HAP-1 (cell line): ENCODE measurements at regions of chr11 and their contacts with region 1.

Region 1: DNA sequence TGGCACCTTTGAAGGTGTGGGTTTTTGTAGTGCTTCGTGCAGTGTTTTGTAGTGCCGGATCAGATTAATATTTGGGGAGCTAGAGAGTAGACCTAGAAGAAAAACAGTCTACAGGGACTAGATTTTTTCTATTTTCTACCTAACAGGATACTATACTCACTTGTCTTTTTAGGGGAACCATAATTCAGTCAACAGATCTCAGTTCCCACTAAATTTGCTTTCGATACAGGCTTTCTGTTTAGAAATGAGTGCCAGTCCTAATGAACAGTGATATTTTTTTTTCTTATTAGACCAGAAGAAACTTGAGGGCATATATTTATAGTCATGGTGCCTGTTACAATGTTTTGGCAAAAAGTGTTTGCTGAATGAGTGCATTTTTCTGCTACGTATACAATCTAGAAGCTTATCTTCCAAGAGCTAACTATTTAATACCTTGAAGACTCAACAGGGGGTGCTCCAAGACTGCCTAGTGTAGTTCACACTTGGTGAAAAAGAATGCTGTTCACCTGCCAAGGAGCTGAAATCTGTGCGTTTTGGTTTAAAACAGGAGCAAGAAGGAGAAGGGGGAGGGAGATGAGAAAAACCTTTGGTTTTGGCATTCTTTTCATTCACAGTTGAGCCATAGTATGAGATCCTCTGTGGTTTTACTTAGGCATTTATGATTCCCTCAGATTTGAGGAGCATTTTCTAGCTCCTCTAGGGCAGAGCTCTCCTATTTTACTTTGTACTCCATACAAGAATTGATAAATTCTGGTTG is 44.9 kb upstream of the VSTM5 start:
- DNase-seq: peak; percentile 38 to 51
- H3K4me3 ChIP-seq: no peak overlapping the region
- H3K4me1 ChIP-seq: no peaks in the 10 kb centered on the region
- H3K27me3 ChIP-seq: peaks cover 16% of the 10 kb centered on the region

Region 2: GRCh38 chr11:94089341-94089740 is 194.1 kb after region 1 on chr11:
- in situ Hi-C with region 1: no loop called
- DNase-seq: no peak
- H3K4me3 ChIP-seq: no peak overlapping the region
- H3K4me1 ChIP-seq: no peaks in the 10 kb centered on the region
- H3K27me3 ChIP-seq: peaks cover 7% of the 10 kb centered on the region; the same call in 1 of the 2 replicates

Region 3: DNA sequence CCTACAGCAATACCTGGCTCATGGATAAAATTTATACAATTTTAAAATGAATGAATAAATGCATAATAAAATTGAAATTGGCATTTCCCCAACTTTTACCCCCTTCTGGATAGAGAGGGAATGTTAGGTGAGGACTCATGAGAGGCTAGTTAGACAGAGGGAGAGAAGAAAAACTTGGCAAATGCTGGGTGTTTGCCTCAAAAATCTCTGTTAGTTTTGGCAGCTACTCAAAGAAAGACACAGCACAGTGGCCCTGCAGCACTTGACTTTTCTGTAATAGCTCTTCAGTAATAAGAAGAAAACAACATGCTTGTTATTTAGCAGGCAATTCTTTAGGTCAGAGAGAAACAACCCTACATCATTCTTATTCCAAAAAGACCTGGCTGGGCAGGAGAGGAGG is 388.4 kb after region 1 on chr11:
- in situ Hi-C with region 1: no loop called
- DNase-seq: no peak
- H3K4me3 ChIP-seq: no peak overlapping the region
- H3K4me1 ChIP-seq: no peaks in the 10 kb centered on the region
- H3K27me3 ChIP-seq: no peaks in the 10 kb centered on the region

Region 4: GRCh38 chr11:94511932-94512781 is 616.9 kb after region 1 on chr11 and contains the start of gene C11orf97:
- in situ Hi-C with region 1: loop called (anchors 25 kb)
- DNase-seq: peak in 1 of 2 experiments; percentile 76
- H3K4me3 ChIP-seq: peak within 1 kb of the TSS; percentile 25
- H3K4me1 ChIP-seq: no peaks in the 10 kb centered on the region
- H3K27me3 ChIP-seq: peaks cover 19% of the 10 kb centered on the region